HCT116 (cell line): ENCODE measurements at regions of chr3 and their contacts with region 1.

Region 1: GRCh38 chr3:168040607-168041208 is 55.0 kb downstream of the GOLIM4 start:
- DNase-seq: peak; percentile 32
- ATAC-seq: peak; percentile 80
- H3K4me3 ChIP-seq: no peak overlapping the region
- H3K27ac ChIP-seq: no peak overlapping the region
- H3K4me1 ChIP-seq: no peaks in the 10 kb centered on the region
- H3K27me3 ChIP-seq: no peaks in the 10 kb centered on the region
- CTCF ChIP-seq: peak; percentile 74 to 82 (median 75); a peak in 5 of 6 replicates
- POLR2A ChIP-seq: no peak
- RAD21 ChIP-seq: peak; percentile 84

Region 2: DNA sequence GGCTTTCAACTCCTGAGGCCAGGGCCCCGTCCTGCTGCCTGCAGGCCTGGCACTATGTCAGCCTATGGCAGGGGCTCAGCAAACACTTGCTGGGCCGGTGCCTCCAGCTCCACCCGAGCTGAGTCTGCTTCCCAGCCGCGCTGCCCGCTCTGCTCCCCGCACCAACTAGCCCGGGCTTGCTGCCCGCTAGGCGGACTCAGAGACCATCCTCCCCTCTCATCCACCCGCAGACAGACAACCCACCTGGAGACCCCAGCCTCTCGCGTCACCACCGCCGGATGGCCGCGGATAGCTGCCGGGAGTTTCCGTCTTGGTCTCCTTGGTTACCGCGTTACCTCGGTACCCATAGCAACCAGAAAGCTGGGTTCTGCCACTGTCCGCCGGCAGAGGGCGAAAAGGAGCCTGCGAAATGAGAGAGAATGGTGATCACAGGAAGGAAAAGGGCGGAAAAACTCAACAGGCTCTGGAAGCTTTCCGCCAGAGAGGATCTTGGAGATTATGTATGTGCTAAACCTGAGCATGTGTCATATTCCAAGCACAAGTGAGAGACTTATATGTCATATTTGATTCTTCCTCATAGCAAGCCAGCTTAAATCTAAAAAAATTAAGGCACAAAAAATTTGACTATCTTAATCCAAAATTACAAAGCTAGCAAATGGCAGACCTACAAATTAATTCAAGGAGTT is 660.6 kb before region 1 on chr3 and contains the start of gene ZBBX:
- CTCF ChIA-PET with region 1: interaction called, 6 read pairs
- POLR2A ChIA-PET with region 1: no interaction called
- RAD21 ChIA-PET with region 1: no interaction called
- intact Hi-C with region 1: loop called (anchors 2 kb)
- DNase-seq: peak; percentile 77
- ATAC-seq: peak; percentile 92
- H3K4me3 ChIP-seq: peak within 1 kb of the TSS; percentile 54 to 61
- H3K27ac ChIP-seq: no peak within 1 kb of the TSS
- H3K4me1 ChIP-seq: peaks cover 0 to 11% of the 10 kb centered on the region in 2 experiments; a peak in 3 of 4 replicates
- H3K27me3 ChIP-seq: no peaks in the 10 kb centered on the region
- CTCF ChIP-seq: peak; percentile 74 to 94 (median 88)
- POLR2A ChIP-seq: no peak
- RAD21 ChIP-seq: peak; percentile 71
- total RNA-seq, gene ZBBX: 0.81 TPM

Region 3: DNA sequence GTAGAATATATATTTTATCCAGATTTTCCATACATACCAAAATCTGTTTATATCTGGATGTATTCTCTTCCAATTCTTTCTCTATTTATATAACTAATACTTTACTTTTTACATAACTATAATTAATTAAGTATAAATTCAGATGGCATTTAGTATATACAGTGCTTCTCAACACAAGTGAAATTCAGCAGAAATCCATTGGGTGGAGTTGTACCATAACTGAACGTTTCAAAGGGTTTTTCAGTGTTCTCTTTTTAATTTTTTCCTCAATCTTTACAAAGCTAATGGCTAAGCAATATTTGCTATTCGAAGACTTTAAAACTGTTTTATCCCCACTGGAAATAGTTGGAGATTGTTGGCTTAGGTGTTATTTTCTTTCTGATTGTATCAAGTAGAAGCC is 646.7 kb before region 1 on chr3:
- CTCF ChIA-PET with region 1: interaction called, 11 read pairs
- POLR2A ChIA-PET with region 1: no interaction called
- RAD21 ChIA-PET with region 1: no interaction called
- intact Hi-C with region 1: no loop called
- DNase-seq: no peak
- ATAC-seq: no peak
- H3K4me3 ChIP-seq: no peak overlapping the region
- H3K27ac ChIP-seq: no peak overlapping the region
- H3K4me1 ChIP-seq: no peaks in the 10 kb centered on the region
- H3K27me3 ChIP-seq: no peaks in the 10 kb centered on the region
- CTCF ChIP-seq: peak in 1 of 3 experiments; percentile 26; a peak in 2 of 6 replicates
- POLR2A ChIP-seq: no peak
- RAD21 ChIP-seq: peak; percentile 43

Region 4: GRCh38 chr3:167406875-167407492 is 633.7 kb before region 1 on chr3:
- CTCF ChIA-PET with region 1: no interaction called
- POLR2A ChIA-PET with region 1: no interaction called
- RAD21 ChIA-PET with region 1: no interaction called
- intact Hi-C with region 1: loop called (anchors 1 kb)
- DNase-seq: peak; percentile 58
- ATAC-seq: peak; percentile 99
- H3K4me3 ChIP-seq: no peak overlapping the region
- H3K27ac ChIP-seq: no peak overlapping the region
- H3K4me1 ChIP-seq: no peaks in the 10 kb centered on the region
- H3K27me3 ChIP-seq: no peaks in the 10 kb centered on the region
- CTCF ChIP-seq: peak; percentile 58 to 81 (median 79)
- POLR2A ChIP-seq: no peak
- RAD21 ChIP-seq: peak; percentile 88

Region 5: DNA sequence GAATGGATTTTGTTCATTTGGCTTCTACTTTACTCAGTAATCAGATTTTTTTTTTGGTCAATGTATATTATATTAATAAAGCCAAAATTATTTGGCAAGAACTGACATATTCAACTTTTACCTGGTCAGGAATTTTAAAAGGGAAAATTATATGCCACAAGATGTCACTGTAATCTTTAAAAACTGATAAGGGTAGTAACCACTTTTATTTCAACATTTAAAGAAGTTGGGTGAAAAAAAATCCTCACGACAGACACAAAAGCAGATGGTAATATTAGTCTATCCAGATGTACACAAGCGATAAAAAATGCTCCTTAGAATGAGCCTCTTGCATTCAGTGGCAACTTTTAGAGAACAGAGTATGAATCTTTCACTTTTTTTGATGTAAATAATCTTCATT is 203.2 kb before region 1 on chr3:
- CTCF ChIA-PET with region 1: interaction called, 3 read pairs
- POLR2A ChIA-PET with region 1: no interaction called
- RAD21 ChIA-PET with region 1: interaction called in 1 of 2 experiments, 3 read pairs
- intact Hi-C with region 1: loop called (anchors 1 kb)
- DNase-seq: no peak
- ATAC-seq: no peak
- H3K4me3 ChIP-seq: no peak overlapping the region
- H3K27ac ChIP-seq: no peak overlapping the region
- H3K4me1 ChIP-seq: no peaks in the 10 kb centered on the region
- H3K27me3 ChIP-seq: no peaks in the 10 kb centered on the region
- CTCF ChIP-seq: peak in 2 of 3 experiments; percentile 15 to 48; a peak in 1 of 6 replicates
- POLR2A ChIP-seq: no peak
- RAD21 ChIP-seq: peak; percentile 48

Region 6: GRCh38 chr3:167872941-167873340 is 167.8 kb before region 1 on chr3:
- CTCF ChIA-PET with region 1: no interaction called
- POLR2A ChIA-PET with region 1: no interaction called
- RAD21 ChIA-PET with region 1: no interaction called
- intact Hi-C with region 1: no loop called
- DNase-seq: no peak
- ATAC-seq: peak; percentile 73
- H3K4me3 ChIP-seq: no peak overlapping the region
- H3K27ac ChIP-seq: no peak overlapping the region
- H3K4me1 ChIP-seq: peaks cover 0 to 5% of the 10 kb centered on the region in 2 experiments; a peak in 2 of 4 replicates
- H3K27me3 ChIP-seq: no peaks in the 10 kb centered on the region
- CTCF ChIP-seq: peak in 2 of 3 experiments; percentile 32 to 51; a peak in 2 of 6 replicates
- POLR2A ChIP-seq: no peak
- RAD21 ChIP-seq: no peak

Region 7: DNA sequence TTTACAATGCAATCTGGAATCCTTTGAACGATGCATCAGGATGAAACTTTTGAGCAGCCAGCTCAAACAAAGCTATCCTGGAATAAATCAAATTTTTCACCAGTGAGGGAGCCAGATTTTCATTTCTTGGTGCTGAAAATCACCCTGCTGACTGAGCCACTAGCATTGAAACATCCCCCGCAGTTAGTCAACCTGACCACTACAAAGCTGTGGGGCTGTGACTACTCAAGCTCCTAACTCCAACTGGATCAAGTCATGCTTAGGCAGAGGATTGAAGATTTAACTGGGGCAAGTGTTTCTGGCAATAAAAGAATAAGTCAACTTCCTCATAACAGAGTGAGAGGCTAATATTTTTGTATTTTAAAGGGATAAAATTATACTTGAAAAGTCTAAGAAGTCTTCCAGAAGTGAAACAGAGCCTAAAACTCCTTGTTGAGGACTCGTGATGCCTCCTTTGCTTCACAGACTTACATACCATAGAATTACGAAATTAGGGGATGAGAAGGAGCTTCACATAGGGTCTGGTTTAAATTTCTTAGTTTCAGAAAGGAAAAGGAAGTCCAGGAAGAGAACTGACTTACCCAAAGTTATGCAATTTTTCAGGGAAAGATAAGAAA is 127.4 kb before region 1 on chr3:
- CTCF ChIA-PET with region 1: no interaction called
- POLR2A ChIA-PET with region 1: no interaction called
- RAD21 ChIA-PET with region 1: no interaction called
- intact Hi-C with region 1: no loop called
- DNase-seq: peak; percentile 31
- ATAC-seq: peak; percentile 95
- H3K4me3 ChIP-seq: no peak overlapping the region
- H3K27ac ChIP-seq: no peak overlapping the region
- H3K4me1 ChIP-seq: 0 out of 4 replicates have a peak, but pooled peaks cover 0 to 3% of the 10 kb centered on the region in 2 experiments
- H3K27me3 ChIP-seq: no peaks in the 10 kb centered on the region
- CTCF ChIP-seq: peak in 2 of 3 experiments; percentile 35 to 37; a peak in 4 of 6 replicates
- POLR2A ChIP-seq: no peak
- RAD21 ChIP-seq: 0 out of 2 replicates have a peak, but pooled peaks have one; percentile 4

Region 8: GRCh38 chr3:167929968-167930367 is 110.7 kb before region 1 on chr3:
- CTCF ChIA-PET with region 1: interaction called, 11 read pairs
- POLR2A ChIA-PET with region 1: no interaction called
- RAD21 ChIA-PET with region 1: no interaction called
- intact Hi-C with region 1: loop called (anchors 1 kb)
- DNase-seq: no peak
- ATAC-seq: no peak
- H3K4me3 ChIP-seq: no peak overlapping the region
- H3K27ac ChIP-seq: no peak overlapping the region
- H3K4me1 ChIP-seq: no peaks in the 10 kb centered on the region
- H3K27me3 ChIP-seq: no peaks in the 10 kb centered on the region
- CTCF ChIP-seq: no peak
- POLR2A ChIP-seq: no peak
- RAD21 ChIP-seq: no peak

Region 9: GRCh38 chr3:168073842-168074635 is 33.3 kb after region 1 on chr3:
- CTCF ChIA-PET with region 1: no interaction called
- POLR2A ChIA-PET with region 1: no interaction called
- RAD21 ChIA-PET with region 1: no interaction called
- intact Hi-C with region 1: no loop called
- DNase-seq: no peak
- ATAC-seq: no peak
- H3K4me3 ChIP-seq: no peak overlapping the region
- H3K27ac ChIP-seq: no peak overlapping the region
- H3K4me1 ChIP-seq: peaks cover 18 to 44% of the 10 kb centered on the region in 2 experiments
- H3K27me3 ChIP-seq: no peaks in the 10 kb centered on the region
- CTCF ChIP-seq: no peak
- POLR2A ChIP-seq: no peak
- RAD21 ChIP-seq: no peak